Adrenal gland (tissue), 19 donors: ENCODE measurements at regions of chr22 and their contacts with region 1.

Region 1: DNA sequence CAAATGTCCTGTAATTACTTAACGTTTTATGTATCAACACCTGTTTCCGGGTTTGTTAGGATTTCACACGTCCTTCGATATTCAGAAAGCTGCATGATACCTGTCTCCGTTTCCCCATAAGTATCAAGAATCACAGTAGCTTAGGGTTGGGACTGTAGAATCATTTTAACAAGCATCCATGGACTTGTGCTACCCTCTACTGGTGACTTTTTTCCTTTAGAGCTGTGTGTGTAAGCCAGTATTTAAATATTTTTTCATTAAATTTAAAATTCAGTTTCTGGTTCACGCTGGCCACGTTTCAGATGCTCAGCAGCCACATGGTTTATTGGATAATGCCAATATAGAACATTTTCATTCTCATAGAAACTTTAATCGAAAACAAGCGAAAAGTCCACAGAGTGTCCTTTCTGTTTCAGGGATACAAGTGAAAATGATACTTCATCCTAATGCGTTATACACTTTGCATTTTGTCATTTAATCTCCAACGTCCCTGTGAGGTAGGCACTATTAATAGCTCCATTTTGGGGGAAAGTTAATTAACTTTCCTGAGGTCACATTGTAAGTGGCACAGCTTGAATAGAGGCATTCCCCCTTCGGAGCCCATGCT is 61.5 kb upstream of the SLC25A18 start:
- DNase-seq: peak in 5 of 7 donors; percentile 21 to 45 (median 33)
- H3K4me3 ChIP-seq: no peak overlapping the region
- H3K27ac ChIP-seq: no peak overlapping the region
- H3K4me1 ChIP-seq: no peaks in the 10 kb centered on the region
- H3K27me3 ChIP-seq: no peaks in the 10 kb centered on the region
- CTCF ChIP-seq: peak; percentile 37 to 82 (median 75)
- POLR2A ChIP-seq: no peak

Region 2: DNA sequence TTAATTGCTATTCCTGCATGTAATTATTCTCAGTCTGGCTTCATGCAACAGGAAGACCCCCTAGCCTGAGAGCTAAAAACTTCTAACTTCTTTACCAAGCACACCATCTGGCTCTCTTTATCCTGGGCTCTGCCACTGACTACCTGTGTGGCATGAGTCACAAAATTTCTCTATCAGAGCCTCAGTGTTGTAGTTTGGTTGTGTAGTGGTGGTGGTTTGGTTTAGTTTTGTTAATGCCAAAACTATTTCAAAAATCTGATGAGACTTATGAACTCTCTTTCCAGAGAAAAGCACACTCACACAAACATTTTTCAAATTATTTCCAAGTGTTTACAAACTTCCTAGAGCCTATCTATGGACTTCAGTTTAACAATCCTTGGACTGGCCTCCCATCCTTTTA is 424.5 kb before region 1 on chr22:
- intact Hi-C with region 1: loop called (anchors 5 to 10 kb)
- DNase-seq: no peak
- H3K4me3 ChIP-seq: no peak overlapping the region
- H3K27ac ChIP-seq: no peak overlapping the region
- H3K4me1 ChIP-seq: peaks cover 0 to 4% of the 10 kb centered on the region in 2 donors
- H3K27me3 ChIP-seq: no peaks in the 10 kb centered on the region
- CTCF ChIP-seq: no peak
- POLR2A ChIP-seq: no peak